Common myeloid progenitor, CD34-positive (primary cell): ENCODE measurements at regions of chr17 and their contacts with region 1.

Region 1: GRCh38 chr17:73429440-73430164 is 117.8 kb upstream of the CDC42EP4 start:
- DNase-seq: peak; percentile 78 to 90 (median 87)
- H3K4me3 ChIP-seq: peak overlapping the region in 2 of 7 experiments; percentile 28 to 50
- H3K27ac ChIP-seq: peak overlapping the region in 1 of 2 experiments; percentile 29
- H3K4me1 ChIP-seq: peaks cover 0 to 20% (median 13%) of the 10 kb centered on the region in 4 experiments
- H3K27me3 ChIP-seq: no peaks in the 10 kb centered on the region

Region 2: GRCh38 chr17:73142872-73143381 is 286.7 kb before region 1 on chr17:
- CTCF ChIA-PET with region 1: no interaction called
- POLR2A ChIA-PET with region 1: no interaction called
- DNase-seq: peak; percentile 39 to 78 (median 71)
- H3K4me3 ChIP-seq: peak overlapping the region in 1 of 7 experiments; percentile 30
- H3K27ac ChIP-seq: no peak overlapping the region
- H3K4me1 ChIP-seq: peaks cover 0 to 15% (median 10%) of the 10 kb centered on the region in 4 experiments
- H3K27me3 ChIP-seq: peaks cover 0 to 7% (median 0%) of the 10 kb centered on the region in 5 experiments

Region 3: GRCh38 chr17:73311781-73312641 is 117.6 kb before region 1 on chr17 and contains the start of gene CDC42EP4:
- CTCF ChIA-PET with region 1: no interaction called
- POLR2A ChIA-PET with region 1: no interaction called
- DNase-seq: peak; percentile 81 to 88 (median 83)
- H3K4me3 ChIP-seq: peak within 1 kb of the TSS; percentile 72 to 88 (median 81)
- H3K27ac ChIP-seq: peak within 1 kb of the TSS in 1 of 2 experiments; percentile 66
- H3K4me1 ChIP-seq: peaks cover 0 to 36% (median 35%) of the 10 kb centered on the region in 4 experiments
- H3K27me3 ChIP-seq: peaks cover 0 to 2% (median 0%) of the 10 kb centered on the region in 5 experiments

Region 4: DNA sequence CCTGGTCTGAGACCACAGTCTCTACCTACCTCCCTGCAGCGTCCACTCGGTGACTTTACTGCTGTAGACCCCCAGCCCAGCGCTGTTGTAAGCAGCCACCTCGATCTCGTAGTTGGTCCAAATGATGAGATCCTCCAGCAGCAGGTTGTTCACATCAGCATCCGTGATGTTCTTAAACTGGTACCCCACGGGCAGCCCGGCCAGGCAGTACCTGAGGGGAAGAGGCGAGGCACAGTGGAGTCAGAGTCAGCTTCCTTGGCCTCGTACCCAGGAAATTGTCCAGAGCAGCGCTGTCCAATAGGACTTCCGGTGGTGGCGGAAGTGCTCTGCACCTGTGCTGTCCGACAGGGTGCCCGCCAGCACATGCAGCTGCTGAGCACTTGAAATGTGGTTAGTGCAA is 13.8 kb before region 1 on chr17:
- CTCF ChIA-PET with region 1: no interaction called
- POLR2A ChIA-PET with region 1: no interaction called
- DNase-seq: no peak
- H3K4me3 ChIP-seq: no peak overlapping the region
- H3K27ac ChIP-seq: no peak overlapping the region
- H3K4me1 ChIP-seq: no peaks in the 10 kb centered on the region
- H3K27me3 ChIP-seq: no peaks in the 10 kb centered on the region

Region 5: GRCh38 chr17:73455050-73455687 is 25.6 kb after region 1 on chr17:
- CTCF ChIA-PET with region 1: interaction called, 11 read pairs
- POLR2A ChIA-PET with region 1: no interaction called
- DNase-seq: no peak
- H3K4me3 ChIP-seq: no peak overlapping the region
- H3K27ac ChIP-seq: no peak overlapping the region
- H3K4me1 ChIP-seq: no peaks in the 10 kb centered on the region
- H3K27me3 ChIP-seq: no peaks in the 10 kb centered on the region

Region 6: GRCh38 chr17:73586921-73587602 is 157.5 kb after region 1 on chr17:
- CTCF ChIA-PET with region 1: no interaction called
- POLR2A ChIA-PET with region 1: no interaction called
- DNase-seq: no peak
- H3K4me3 ChIP-seq: no peak overlapping the region
- H3K27ac ChIP-seq: no peak overlapping the region
- H3K4me1 ChIP-seq: peaks cover 2 to 52% (median 29%) of the 10 kb centered on the region in 4 experiments
- H3K27me3 ChIP-seq: no peaks in the 10 kb centered on the region

Region 7: DNA sequence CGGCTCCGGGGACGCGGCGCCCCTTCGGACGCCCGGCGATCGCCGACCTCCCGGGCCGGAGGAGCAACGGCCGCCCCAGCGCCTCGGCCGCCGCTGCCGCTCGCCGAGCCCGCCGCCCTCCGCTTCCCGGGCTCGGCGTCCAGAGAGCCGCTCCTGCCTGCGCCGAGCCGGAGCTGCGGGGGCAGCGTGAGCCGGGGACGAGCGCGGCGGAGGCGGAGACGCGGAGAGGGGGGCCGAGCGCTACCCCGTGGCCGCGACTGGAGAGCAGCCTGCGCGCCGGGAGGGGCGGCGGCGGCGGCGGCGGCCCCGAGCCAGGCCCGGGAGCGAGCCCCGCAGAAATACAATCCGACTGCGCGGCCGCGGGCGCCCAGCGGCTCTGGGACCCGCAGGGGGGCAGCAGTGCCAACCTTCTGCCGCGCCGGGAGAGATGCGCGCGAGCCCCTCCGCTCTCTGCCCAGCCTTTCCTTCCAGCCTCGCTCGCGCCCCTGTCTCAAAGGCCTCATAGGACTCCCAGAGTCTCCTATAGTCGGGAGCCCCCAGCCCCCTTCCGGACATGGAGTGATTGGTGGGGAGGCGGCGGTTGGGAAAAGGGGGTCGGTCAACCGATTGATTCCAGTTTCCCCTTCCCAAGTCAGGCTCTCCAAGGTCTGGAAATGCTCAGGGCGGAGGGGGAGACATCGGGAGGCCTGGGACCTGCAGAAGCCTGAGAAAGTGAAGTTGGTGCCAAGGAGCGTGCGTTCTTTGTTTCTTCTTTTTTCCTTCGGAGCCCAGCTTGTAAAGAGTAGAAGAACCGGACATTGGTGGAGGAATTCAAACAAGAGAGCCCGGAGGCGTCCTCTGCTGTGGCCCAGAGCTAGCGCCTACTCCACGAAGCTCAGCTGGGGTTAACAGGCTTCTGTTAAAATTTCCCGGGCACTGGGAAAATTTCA is 215.7 kb after region 1 on chr17:
- CTCF ChIA-PET with region 1: interaction called, 24 read pairs
- POLR2A ChIA-PET with region 1: interaction called, 4 read pairs
- DNase-seq: peak; percentile 63 to 84 (median 78)
- H3K4me3 ChIP-seq: peak overlapping the region; percentile 5 to 83 (median 71)
- H3K27ac ChIP-seq: no peak overlapping the region
- H3K4me1 ChIP-seq: peaks cover 2 to 36% (median 23%) of the 10 kb centered on the region in 4 experiments
- H3K27me3 ChIP-seq: peaks cover 0 to 51% (median 7%) of the 10 kb centered on the region in 5 experiments

Region 8: DNA sequence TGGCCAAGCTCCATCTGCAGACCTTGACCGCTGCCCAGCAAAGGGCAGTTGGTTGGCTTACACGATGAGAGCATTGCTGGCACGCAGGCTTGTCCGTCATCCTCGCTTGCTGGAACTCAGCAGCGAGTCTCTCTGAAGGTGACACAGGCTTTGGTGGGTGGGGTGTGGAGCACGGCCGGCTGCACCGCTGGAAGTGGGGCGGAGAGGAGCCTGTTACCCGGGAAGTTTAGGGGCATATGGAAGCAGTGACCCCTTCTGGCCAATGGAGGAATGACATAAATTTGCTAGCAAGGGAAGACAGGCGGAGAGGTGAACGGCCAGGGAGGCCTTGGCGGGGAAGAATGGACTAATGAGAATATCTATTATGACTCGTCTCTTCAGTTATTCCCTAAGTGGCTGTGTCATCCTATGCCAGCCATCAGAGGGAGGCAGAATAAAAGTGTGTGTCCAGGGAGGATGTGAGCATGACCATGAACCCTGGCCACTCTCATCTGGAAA is 280.5 kb after region 1 on chr17:
- CTCF ChIA-PET with region 1: interaction called, 43 read pairs
- POLR2A ChIA-PET with region 1: no interaction called
- DNase-seq: peak; percentile 75 to 84 (median 76)
- H3K4me3 ChIP-seq: peak overlapping the region in 1 of 7 experiments; percentile 12
- H3K27ac ChIP-seq: no peak overlapping the region
- H3K4me1 ChIP-seq: peaks cover 0 to 17% (median 6%) of the 10 kb centered on the region in 4 experiments
- H3K27me3 ChIP-seq: peaks cover 0 to 9% (median 0%) of the 10 kb centered on the region in 5 experiments

Region 9: GRCh38 chr17:73841431-73842060 is 411.9 kb after region 1 on chr17:
- CTCF ChIA-PET with region 1: interaction called, 35 read pairs
- POLR2A ChIA-PET with region 1: no interaction called
- DNase-seq: peak; percentile 23 to 62 (median 54)
- H3K4me3 ChIP-seq: no peak overlapping the region
- H3K27ac ChIP-seq: no peak overlapping the region
- H3K4me1 ChIP-seq: peaks cover 0 to 6% (median 1%) of the 10 kb centered on the region in 4 experiments
- H3K27me3 ChIP-seq: no peaks in the 10 kb centered on the region